H1 (cell line): ENCODE measurements at regions of chr15 and their contacts with region 1.

Region 1: DNA sequence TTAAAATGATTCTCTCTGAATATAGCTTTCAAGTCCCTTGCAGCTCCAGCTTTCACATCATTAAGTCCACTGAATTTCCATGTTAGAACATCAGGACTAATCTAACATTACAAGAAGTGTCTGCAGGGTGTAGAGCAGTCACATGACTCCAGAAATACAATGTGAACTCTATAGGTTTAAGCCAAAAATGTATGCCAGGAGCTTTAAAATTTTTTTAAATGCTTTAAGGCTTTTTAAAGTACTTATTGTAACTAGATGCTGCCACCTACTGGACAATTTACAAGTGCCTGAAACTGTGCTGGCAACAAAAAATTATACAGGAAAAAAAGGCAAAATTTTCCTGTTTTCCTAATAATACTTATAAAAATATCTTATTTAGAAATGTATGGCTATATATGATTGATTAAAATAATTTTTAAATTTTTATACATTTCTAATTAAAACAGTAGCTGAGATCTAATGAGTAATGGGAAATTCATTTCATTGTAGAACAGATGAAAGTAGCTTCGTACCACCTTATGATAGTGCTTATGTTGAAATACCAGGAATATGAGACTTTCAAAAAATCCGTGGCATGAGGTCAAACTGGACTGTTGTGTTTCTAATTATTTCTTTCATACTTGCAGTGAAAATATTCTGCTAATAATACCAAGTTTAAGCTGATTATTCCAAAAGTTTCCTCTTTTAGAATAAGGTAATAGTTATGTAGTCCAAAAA is 25.7 kb downstream of the FSIP1 start:
- DNase-seq: no peak
- H3K4me3 ChIP-seq: no peak overlapping the region
- H3K27ac ChIP-seq: no peak overlapping the region
- H3K4me1 ChIP-seq: no peaks in the 10 kb centered on the region
- H3K27me3 ChIP-seq: no peaks in the 10 kb centered on the region
- CTCF ChIP-seq: peak in 2 of 3 experiments; percentile 46 to 57; a peak in 2 of 4 replicates
- EP300 ChIP-seq: no peak
- POLR2A ChIP-seq: no peak
- RAD21 ChIP-seq: peak; percentile 71 to 78

Region 2: DNA sequence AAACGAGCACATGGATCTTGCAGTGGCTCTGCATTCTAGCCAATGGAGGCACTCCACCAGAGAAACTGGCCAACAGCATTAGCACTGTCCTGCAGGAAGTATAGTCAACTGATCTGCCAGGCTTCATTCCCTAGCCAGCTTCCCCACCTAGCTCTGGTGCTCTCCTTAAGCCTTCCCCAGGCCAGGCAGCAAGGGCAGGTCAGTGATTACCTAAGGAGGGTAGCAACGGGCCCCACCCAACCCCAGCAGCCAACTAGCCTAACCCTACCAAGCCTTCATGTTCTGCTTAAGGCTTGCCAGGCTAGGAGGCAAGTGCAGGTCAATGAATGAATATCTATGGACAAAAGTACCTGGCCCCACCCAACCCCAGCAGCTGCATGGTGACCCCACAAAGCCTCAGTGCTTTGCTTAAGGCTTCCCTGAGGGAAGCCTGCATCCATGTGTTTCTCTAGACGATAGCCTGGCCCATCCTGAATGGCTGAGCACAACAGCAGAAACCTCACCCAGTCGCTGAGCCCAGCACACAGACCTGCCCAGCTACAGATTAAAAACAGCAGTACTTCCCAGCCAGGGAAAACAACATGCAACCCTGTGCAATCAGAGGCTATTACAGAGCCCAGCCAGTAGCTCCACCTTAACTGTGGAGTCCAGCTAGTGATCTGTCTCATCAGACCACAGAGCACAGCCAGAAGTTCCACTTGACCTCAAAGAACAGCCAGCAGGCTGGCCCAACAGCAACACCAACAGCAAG is 147.6 kb before region 1 on chr15:
- CTCF ChIA-PET with region 1: interaction called, 62 read pairs
- POLR2A ChIA-PET with region 1: no interaction called
- DNase-seq: no peak
- H3K4me3 ChIP-seq: no peak overlapping the region
- H3K27ac ChIP-seq: no peak overlapping the region
- H3K4me1 ChIP-seq: no peaks in the 10 kb centered on the region
- H3K27me3 ChIP-seq: no peaks in the 10 kb centered on the region
- CTCF ChIP-seq: no peak
- EP300 ChIP-seq: no peak
- POLR2A ChIP-seq: no peak
- RAD21 ChIP-seq: no peak

Region 3: DNA sequence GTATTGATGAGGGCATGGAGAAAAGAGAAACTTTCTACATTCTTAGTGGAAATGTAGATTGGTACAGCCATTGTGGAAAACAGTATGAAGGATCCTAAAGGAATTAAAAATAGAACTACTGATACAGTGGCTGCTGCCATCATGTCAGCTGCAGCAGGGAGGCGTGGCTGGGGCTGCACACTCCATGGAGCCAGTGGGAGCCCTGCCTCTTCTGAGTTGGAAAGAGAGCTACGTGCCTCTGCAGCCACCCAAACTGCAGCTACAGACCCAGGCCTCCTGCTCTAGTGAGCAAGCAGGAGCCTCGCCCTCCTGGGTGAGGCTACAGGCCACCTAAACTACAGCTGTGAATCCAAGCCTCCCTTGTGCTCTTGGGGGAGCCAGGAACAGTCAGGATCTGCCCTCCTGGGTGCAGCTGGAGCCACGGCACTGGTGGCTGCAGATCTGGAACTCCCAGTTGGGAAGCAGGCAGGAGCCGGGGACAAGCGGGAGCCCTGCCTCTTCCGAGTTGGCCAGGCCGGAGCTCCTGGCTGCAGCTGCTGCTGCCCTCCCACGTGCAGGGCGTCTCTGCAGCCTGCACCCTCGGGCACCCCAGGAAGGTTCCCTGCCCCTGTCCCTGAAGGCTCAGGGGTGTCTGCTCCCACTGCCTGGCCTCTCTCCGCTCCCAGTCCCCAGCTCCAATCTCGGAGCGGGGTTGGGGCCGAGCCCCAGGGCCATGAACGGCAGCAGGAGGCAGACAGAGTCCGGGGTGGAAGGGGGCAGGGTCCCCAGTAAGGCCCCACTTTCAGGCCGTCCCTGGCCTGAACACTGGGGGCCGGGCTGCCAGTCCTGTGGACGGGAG is 111.6 kb before region 1 on chr15:
- CTCF ChIA-PET with region 1: interaction called, 12 read pairs
- POLR2A ChIA-PET with region 1: no interaction called
- DNase-seq: no peak
- H3K4me3 ChIP-seq: no peak overlapping the region
- H3K27ac ChIP-seq: no peak overlapping the region
- H3K4me1 ChIP-seq: peaks cover 0 to 7% (median 3%) of the 10 kb centered on the region in 4 experiments; a peak in 4 of 7 replicates
- H3K27me3 ChIP-seq: no peaks in the 10 kb centered on the region
- CTCF ChIP-seq: no peak
- EP300 ChIP-seq: no peak
- POLR2A ChIP-seq: no peak
- RAD21 ChIP-seq: no peak

Region 4: DNA sequence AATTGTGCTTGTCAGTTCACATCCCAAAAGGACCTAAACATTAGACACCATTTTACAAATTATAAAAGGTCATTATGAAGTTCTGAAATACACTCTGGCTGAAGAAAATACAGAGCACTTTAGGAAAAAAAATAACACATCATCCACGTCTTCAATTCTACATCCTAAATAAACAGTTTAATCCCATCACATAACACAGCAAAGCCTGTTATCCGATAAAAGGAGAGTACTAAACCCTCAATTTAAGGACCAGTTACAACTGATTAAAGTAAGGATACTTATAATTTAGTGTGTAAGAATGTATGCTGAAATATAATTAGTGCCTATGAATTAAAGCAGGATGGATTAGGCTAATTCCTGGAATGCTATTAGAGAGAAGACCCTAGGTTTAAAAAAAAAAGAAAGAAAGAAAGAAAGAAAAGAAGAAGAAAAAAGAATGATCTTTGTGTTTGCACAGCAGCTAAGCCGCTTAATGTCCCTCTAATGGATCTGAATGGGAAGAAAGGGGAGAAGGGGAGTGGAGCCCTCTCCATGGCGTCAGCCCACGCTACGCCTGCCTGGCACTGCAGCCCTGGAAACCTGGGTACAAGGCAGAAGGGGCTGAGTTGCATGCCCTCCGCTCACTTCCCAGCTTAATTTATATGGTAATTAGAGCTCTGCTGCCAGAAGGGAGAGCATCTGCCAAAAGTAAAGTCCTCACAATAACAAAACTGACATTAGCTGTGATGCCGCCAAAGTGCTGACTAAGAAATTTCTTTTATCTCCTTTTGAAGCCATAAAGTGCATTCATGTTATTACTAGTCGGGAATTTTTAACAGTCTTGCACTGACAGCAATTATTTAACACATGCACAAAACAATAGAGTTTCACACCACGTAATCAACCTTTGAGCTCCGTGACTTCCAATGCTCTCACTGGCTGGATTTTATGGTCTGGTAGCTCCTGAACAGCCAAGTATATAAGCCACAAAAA is 64.3 kb before region 1 on chr15:
- CTCF ChIA-PET with region 1: interaction called, 89 read pairs
- POLR2A ChIA-PET with region 1: no interaction called
- DNase-seq: peak in 1 of 2 experiments; percentile 10
- H3K4me3 ChIP-seq: peak overlapping the region in 1 of 4 experiments; percentile 19; a peak in 1 of 8 replicates
- H3K27ac ChIP-seq: no peak overlapping the region
- H3K4me1 ChIP-seq: peaks cover 0 to 6% (median 4%) of the 10 kb centered on the region in 4 experiments; a peak in 3 of 7 replicates
- H3K27me3 ChIP-seq: peaks cover 0 to 1% (median 0%) of the 10 kb centered on the region in 4 experiments; a peak in 1 of 7 replicates
- CTCF ChIP-seq: no peak
- EP300 ChIP-seq: no peak
- POLR2A ChIP-seq: no peak
- RAD21 ChIP-seq: 0 out of 4 replicates have a peak, but pooled peaks of 1 of the 2 experiments have one; percentile 2

Region 5: DNA sequence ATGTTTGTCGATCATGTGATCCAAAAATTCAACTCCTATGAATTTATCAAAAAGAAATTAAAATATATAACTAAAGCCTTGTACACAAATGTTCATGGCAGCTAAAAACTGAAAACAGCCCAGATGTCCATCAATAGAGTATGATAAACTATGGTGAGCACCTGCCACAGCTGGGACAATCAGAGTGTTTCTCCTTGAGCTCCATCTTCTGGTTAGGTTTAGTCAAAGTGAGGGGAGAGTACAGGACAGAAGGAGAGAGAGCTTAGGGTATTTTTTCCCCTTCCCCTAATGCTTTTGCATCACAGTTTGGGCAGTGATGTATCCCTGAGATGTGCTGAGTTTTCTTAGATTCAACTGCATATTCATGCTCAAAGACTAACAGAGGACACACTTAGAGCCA is 39.8 kb before region 1 on chr15:
- CTCF ChIA-PET with region 1: interaction called, 10 read pairs
- POLR2A ChIA-PET with region 1: no interaction called
- DNase-seq: no peak
- H3K4me3 ChIP-seq: no peak overlapping the region
- H3K27ac ChIP-seq: no peak overlapping the region
- H3K4me1 ChIP-seq: no peaks in the 10 kb centered on the region
- H3K27me3 ChIP-seq: no peaks in the 10 kb centered on the region
- CTCF ChIP-seq: no peak
- EP300 ChIP-seq: no peak
- POLR2A ChIP-seq: no peak
- RAD21 ChIP-seq: no peak

Region 6: GRCh38 chr15:39744334-39745103 is 12.4 kb before region 1 on chr15:
- CTCF ChIA-PET with region 1: interaction called, 35 read pairs
- POLR2A ChIA-PET with region 1: no interaction called
- DNase-seq: no peak
- H3K4me3 ChIP-seq: no peak overlapping the region
- H3K27ac ChIP-seq: no peak overlapping the region
- H3K4me1 ChIP-seq: no peaks in the 10 kb centered on the region
- H3K27me3 ChIP-seq: no peaks in the 10 kb centered on the region
- CTCF ChIP-seq: peak; percentile 16 to 31 (median 16)
- EP300 ChIP-seq: no peak
- POLR2A ChIP-seq: no peak
- RAD21 ChIP-seq: peak in 1 of 2 experiments; percentile 19; a peak in 1 of 4 replicates

Region 7: GRCh38 chr15:39819533-39819932 is 62.6 kb after region 1 on chr15:
- CTCF ChIA-PET with region 1: no interaction called
- POLR2A ChIA-PET with region 1: no interaction called
- DNase-seq: no peak
- H3K4me3 ChIP-seq: no peak overlapping the region
- H3K27ac ChIP-seq: no peak overlapping the region
- H3K4me1 ChIP-seq: peaks cover 0 to 13% (median 9%) of the 10 kb centered on the region in 4 experiments; a peak in 3 of 7 replicates
- H3K27me3 ChIP-seq: no peaks in the 10 kb centered on the region
- CTCF ChIP-seq: no peak
- EP300 ChIP-seq: no peak
- POLR2A ChIP-seq: no peak
- RAD21 ChIP-seq: no peak

Region 8: GRCh38 chr15:39869858-39870515 is 113.0 kb after region 1 on chr15:
- CTCF ChIA-PET with region 1: no interaction called
- POLR2A ChIA-PET with region 1: no interaction called
- DNase-seq: no peak
- H3K4me3 ChIP-seq: no peak overlapping the region
- H3K27ac ChIP-seq: no peak overlapping the region
- H3K4me1 ChIP-seq: peaks cover 0 to 9% (median 3%) of the 10 kb centered on the region in 4 experiments; a peak in 6 of 7 replicates
- H3K27me3 ChIP-seq: no peaks in the 10 kb centered on the region
- CTCF ChIP-seq: no peak
- EP300 ChIP-seq: no peak
- POLR2A ChIP-seq: no peak
- RAD21 ChIP-seq: no peak